GM13977 (cell line): ENCODE measurements at regions of chr17 and their contacts with region 1.

Region 1: DNA sequence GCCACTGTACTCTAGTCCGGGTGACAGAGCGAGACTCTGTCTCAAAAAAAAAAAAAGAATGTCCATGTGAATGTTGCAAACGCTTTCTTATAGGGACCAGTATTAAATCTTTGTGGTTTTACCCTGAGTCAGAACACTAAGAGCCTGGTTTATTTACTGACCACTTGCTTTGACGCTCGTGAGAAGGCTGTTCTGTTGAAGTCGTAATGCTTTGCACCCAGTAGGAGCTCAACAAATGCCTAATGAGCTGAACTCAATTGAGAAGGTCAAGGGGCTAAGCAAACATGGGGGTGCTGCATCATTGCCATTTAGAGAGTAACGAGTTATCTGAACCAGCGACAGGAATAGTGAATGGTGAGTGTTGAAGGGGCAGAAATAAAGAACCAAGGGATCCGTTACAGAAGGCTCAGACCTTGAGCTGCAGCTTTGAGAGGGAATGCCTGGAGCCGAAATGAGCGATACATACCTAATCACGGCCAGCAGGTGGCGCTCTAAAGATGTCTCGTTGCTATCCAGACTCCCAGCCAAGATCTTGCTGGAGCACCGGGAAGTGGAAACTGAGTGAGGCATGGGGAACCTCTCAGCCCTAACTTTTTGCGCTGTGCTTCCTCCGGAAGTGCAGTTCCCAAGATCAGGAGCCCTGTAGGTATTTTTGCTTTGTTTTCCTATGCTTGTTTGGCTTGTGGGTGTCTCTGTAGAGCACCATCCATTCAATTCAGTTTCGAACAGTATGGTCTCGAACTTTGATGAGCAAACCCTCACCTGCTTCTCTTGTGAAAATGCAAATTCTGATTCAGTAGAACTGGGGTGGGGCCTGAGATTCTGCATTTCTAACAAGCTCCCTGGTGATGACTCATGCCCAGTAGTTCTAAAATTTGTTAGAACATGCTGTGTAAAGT is 12.6 kb upstream of the RNF222 start:
- DNase-seq: peak; percentile 71
- CTCF ChIP-seq: peak; percentile 88

Region 2: GRCh38 chr17:8268550-8269298 is 141.5 kb before region 1 on chr17:
- in situ Hi-C with region 1: no loop called
- DNase-seq: no peak
- CTCF ChIP-seq: no peak

Region 3: GRCh38 chr17:8753976-8754440 is 343.8 kb after region 1 on chr17:
- in situ Hi-C with region 1: loop called (anchors 25 kb)
- DNase-seq: peak; percentile 67
- CTCF ChIP-seq: peak; percentile 64